ENCODE measurements at regions of chr10 and their contacts with region 1.

Region 1: GRCh38 chr10:60646966-60647796 is 131.1 kb upstream of the CDK1 start:
- DNase-seq: peak in 2 of 10 donors; percentile 17 to 26

Region 2: GRCh38 chr10:60099998-60100747 is 547.0 kb before region 1 on chr10:
- intact Hi-C with region 1: loop called (anchors 10 kb)
- DNase-seq: no peak

Region 3: DNA sequence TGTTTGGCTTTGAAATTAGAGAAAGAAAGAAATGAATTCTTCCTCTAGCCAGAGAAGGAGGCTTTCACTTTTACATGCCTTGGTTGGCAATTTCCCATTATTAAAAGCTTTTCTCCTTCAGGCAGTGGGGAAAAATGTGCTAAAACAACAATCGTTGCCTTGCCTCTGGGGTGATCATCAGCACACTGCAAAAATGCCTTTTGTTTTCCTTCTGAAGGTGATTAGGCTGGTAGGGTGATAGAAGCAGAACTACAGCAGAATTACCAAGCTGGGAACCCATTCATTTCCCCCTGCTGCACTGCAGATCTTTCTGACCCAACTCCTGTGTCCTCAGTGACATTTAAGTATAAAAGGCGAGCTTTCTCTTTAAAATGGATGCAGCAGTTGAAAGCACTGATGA is 279.8 kb before region 1 on chr10:
- intact Hi-C with region 1: no loop called
- DNase-seq: no peak

Measured in posterior cingulate gyrus (tissue), 11 donors.